ENCODE measurements at regions of chr11 and their contacts with region 1.

Region 1: GRCh38 chr11:819129-819931 is 616 bp downstream of the PNPLA2 start:
- DNase-seq: peak; percentile 90 to 93 (median 92)
- H3K4me3 ChIP-seq: peak overlapping the region; percentile 84
- H3K4me3 Mint-ChIP-seq: peak overlapping the region; percentile 84 to 95 (median 89)
- H3K27ac ChIP-seq: peak overlapping the region; percentile 75
- H3K27ac Mint-ChIP-seq: peak overlapping the region in 6 of 8 donors; percentile 70 to 94 (median 84)
- H3K4me1 ChIP-seq: peaks cover 21% of the 10 kb centered on the region
- H3K4me1 Mint-ChIP-seq: peaks cover 6 to 18% (median 7%) of the 10 kb centered on the region in 3 donors
- H3K27me3 ChIP-seq: no peaks in the 10 kb centered on the region
- H3K27me3 Mint-ChIP-seq: no peaks in the 10 kb centered on the region

Region 2: GRCh38 chr11:629237-629583 is 190.1 kb before region 1 on chr11:
- CTCF ChIA-PET with region 1: no interaction called
- POLR2A ChIA-PET with region 1: no interaction called
- DNase-seq: no peak
- H3K4me3 ChIP-seq: no peak overlapping the region
- H3K4me3 Mint-ChIP-seq: peak overlapping the region; percentile 57 to 81 (median 76)
- H3K27ac ChIP-seq: no peak overlapping the region
- H3K27ac Mint-ChIP-seq: peak overlapping the region in 6 of 8 donors; percentile 0 to 92 (median 12)
- H3K4me1 ChIP-seq: peaks cover 9% of the 10 kb centered on the region
- H3K4me1 Mint-ChIP-seq: peaks cover 14 to 24% (median 20%) of the 10 kb centered on the region in 3 donors
- H3K27me3 ChIP-seq: peaks cover 4% of the 10 kb centered on the region
- H3K27me3 Mint-ChIP-seq: peaks cover 16 to 21% of the 10 kb centered on the region in 2 donors

Region 3: GRCh38 chr11:832321-833113 is 13.2 kb after region 1 on chr11 and contains the start of gene CD151:
- CTCF ChIA-PET with region 1: interaction called, 5 read pairs
- POLR2A ChIA-PET with region 1: interaction called, 16 read pairs
- DNase-seq: peak in 3 of 5 donors; percentile 44 to 63 (median 44)
- H3K4me3 ChIP-seq: peak within 1 kb of the TSS; percentile 34
- H3K4me3 Mint-ChIP-seq: peak within 1 kb of the TSS; percentile 63 to 87 (median 72)
- H3K27ac ChIP-seq: peak within 1 kb of the TSS; percentile 59
- H3K27ac Mint-ChIP-seq: peak within 1 kb of the TSS in 3 of 8 donors; percentile 52 to 84 (median 66)
- H3K4me1 ChIP-seq: peaks cover 41% of the 10 kb centered on the region
- H3K4me1 Mint-ChIP-seq: peaks cover 0 to 62% (median 13%) of the 10 kb centered on the region in 3 donors
- H3K27me3 ChIP-seq: peaks cover 19% of the 10 kb centered on the region
- H3K27me3 Mint-ChIP-seq: peaks cover 4 to 18% of the 10 kb centered on the region in 2 donors
- total RNA-seq, gene CD151: 61.2 to 65.5 TPM

Region 4: DNA sequence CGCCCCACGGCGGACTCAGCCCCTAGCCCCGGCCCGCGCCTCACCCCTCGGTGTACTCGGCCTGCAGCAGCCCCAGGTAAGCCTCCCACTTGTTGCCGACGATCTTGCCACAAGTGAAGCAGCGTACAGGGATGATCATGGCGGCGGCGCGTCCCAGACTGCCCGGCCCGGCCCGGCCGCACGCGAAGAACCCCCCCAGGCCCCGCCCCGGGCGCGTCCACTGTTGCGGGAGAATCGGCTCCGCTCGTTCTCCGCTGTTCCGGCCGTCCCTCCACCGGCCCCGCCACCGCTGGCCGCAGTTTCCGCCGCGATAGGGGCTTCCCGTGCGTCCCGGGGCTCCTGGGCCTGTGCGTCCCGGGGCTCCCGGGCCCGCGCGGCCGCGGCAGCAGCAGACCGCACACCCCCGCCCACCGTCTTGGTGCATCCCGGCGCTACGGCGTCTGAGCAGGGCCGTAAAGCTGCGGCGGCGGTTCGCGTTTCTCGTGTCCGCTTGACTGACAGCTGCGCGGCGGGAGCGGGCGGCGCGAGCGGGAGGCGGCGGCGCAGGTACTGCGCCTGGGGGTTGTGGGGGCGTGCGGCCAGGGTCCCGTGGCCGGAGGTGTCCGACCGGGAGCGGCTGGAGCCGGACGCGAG is 23.2 kb after region 1 on chr11 and contains the starts of genes POLR2L and TSPAN4:
- CTCF ChIA-PET with region 1: interaction called, 5 read pairs
- POLR2A ChIA-PET with region 1: interaction called, 16 read pairs
- DNase-seq: peak; percentile 79 to 90 (median 82)
- H3K4me3 ChIP-seq: peak within 1 kb of the TSS; percentile 74
- H3K4me3 Mint-ChIP-seq: peak within 1 kb of the TSS; percentile 84 to 91 (median 86)
- H3K27ac ChIP-seq: peak within 1 kb of the TSS; percentile 74
- H3K27ac Mint-ChIP-seq: peak within 1 kb of the TSS; percentile 21 to 84 (median 68)
- H3K4me1 ChIP-seq: peaks cover 29% of the 10 kb centered on the region
- H3K4me1 Mint-ChIP-seq: peaks cover 15 to 33% (median 15%) of the 10 kb centered on the region in 3 donors
- H3K27me3 ChIP-seq: no peaks in the 10 kb centered on the region
- H3K27me3 Mint-ChIP-seq: peaks cover 3 to 4% of the 10 kb centered on the region in 2 donors
- total RNA-seq, gene POLR2L: 178 to 182 TPM
- total RNA-seq, gene TSPAN4: 8.8 to 9.4 TPM

Measured in CD8-positive, alpha-beta memory T cell (primary cell).